BJ (cell line): ENCODE measurements at regions of chr11 and their contacts with region 1.

Region 1: DNA sequence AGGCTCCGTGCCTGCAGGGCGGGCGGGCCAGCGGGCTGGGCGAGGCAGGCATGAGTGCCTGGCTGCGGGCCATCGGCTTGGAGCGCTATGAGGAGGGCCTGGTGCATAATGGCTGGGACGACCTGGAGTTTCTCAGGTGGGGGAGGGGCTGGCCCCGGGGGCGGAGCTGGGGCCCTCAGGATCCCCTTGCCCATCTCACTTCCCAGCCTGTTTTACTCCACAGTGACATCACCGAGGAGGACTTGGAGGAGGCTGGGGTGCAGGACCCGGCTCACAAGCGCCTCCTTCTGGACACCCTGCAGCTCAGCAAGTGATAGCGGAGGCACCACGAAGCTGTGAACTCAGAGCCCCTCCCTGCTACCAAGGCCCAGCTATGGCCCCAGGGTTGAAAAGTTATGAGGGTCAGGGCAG is 5.9 kb downstream of the PHOX2A start:
- DNase-seq: no peak
- H3K4me3 ChIP-seq: no peak overlapping the region
- H3K27me3 ChIP-seq: peaks cover 11% of the 10 kb centered on the region
- CTCF ChIP-seq: peak; percentile 81

Region 2: DNA sequence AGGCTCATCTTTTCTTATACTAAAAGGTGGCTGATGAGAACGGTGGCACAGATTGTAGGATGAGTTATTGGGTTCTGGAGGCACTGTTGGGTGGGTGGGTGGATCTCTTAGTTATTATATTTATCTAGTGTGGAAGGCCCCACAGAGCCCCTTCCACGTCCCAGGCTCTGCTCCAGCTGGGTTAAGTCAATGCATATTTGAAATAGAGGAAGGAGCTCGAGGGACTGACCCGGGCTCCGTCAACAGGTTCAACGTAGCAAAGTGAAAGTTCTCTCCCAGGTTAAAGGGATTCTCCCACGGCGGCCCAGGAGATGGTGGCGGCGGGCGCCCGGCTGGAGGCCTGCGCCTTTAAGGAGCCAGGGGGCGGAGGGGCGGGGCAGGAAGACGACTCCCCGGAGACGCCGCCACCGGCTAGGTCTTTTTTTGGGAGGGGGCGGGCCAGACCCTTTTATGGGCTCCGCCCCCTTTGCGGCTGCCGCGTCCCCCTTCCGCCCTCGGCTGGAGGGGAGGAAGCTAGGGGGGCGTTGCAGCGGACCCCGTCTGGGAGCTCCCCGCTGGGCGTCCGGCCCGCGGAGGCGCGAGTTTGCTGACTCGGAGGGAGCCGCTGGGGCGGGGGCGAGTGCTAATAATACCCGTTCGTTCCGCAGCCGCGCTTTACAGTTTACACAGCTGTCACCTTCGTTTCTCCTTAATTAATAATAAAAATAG is 15.0 kb before region 1 on chr11:
- CTCF ChIA-PET with region 1: interaction called, 57 read pairs
- POLR2A ChIA-PET with region 1: no interaction called
- DNase-seq: peak; percentile 57
- H3K4me3 ChIP-seq: peak overlapping the region; percentile 81
- H3K27me3 ChIP-seq: peaks cover 10% of the 10 kb centered on the region
- CTCF ChIP-seq: peak; percentile 40